Left ventricle myocardium inferior (tissue), 1 donor: ENCODE measurements at regions of chr10 and their contacts with region 1.

Region 1: GRCh38 chr10:17607603-17608332 is 9.4 kb downstream of the HACD1 start:
- DNase-seq: no peak
- H3K4me3 ChIP-seq: no peak overlapping the region
- H3K27ac ChIP-seq: no peak overlapping the region
- H3K4me1 ChIP-seq: peaks cover 29% of the 10 kb centered on the region
- H3K27me3 ChIP-seq: no peaks in the 10 kb centered on the region
- CTCF ChIP-seq: peak; percentile 93

Region 2: DNA sequence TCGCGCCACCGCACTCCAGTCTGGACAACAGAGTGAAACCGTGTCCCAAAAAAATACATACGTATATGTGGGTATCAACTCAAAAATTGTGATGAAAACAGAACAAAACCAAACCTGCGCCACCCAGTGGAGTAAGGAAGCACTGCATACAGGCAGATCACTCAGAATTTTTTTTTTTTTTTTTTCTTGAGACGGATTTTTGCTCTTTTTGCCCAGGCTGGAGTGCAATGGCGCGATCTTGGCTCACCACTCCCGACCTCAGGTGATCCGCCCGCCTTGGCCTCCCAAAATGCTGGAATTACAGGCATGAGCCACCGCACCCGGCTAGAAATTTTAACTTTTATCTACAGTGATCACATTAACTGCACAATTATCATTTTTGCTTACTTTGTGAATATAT is 135.2 kb after region 1 on chr10:
- intact Hi-C with region 1: loop called (anchors 5 kb)
- DNase-seq: peak; percentile 45
- H3K4me3 ChIP-seq: no peak overlapping the region
- H3K27ac ChIP-seq: no peak overlapping the region
- H3K4me1 ChIP-seq: peaks cover 25% of the 10 kb centered on the region
- H3K27me3 ChIP-seq: no peaks in the 10 kb centered on the region
- CTCF ChIP-seq: peak; percentile 93

Region 3: GRCh38 chr10:18104223-18104872 is 496.6 kb after region 1 on chr10:
- intact Hi-C with region 1: loop called (anchors 5 kb)
- DNase-seq: peak; percentile 24
- H3K4me3 ChIP-seq: no peak overlapping the region
- H3K27ac ChIP-seq: no peak overlapping the region
- H3K4me1 ChIP-seq: no peaks in the 10 kb centered on the region
- H3K27me3 ChIP-seq: no peaks in the 10 kb centered on the region
- CTCF ChIP-seq: peak; percentile 72